ENCODE measurements at regions of chr16 and their contacts with region 1.

Region 1: DNA sequence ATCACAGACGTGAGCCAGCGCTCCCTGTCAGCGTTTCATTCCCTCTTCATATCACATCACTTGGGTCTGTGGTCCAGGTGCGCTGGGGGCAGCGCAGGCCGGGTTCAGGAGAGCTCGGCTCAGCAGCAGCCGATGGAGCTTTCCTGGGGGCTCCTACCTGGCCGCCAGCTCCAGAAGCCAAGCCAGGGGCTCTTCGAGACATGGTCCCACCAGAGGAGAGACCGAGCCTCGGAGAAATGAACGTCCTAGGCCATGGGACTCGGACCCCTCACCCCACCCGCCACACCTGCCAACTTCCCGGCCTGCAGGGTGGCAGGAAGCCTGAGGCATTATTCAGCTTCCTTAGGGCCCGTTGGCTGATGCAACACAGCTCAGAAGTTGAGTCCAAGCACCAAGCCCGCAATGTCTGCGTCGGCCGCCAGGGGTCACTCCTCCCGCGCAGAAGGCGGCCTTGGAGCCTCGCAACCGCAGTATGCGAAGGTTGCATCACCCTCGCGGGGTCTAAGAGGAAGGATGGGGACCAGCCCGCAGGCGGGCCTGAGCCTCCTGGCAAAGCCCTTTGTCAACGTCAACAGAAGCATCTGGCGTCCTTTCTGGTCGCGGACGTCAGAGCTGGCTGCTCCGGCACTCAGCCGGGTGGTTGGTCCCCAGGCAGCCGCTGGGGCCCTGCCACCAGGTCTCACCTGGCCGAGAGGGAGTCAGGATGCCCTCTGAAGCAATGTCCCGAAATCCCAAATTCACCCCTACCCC is 13.2 kb upstream of the KLHDC4 start:
- DNase-seq: peak; percentile 98
- ATAC-seq: peak; percentile 79
- H3K4me3 Mint-ChIP-seq: peak overlapping the region; percentile 89
- H3K27ac Mint-ChIP-seq: peak overlapping the region; percentile 99
- H3K4me1 Mint-ChIP-seq: peaks cover 42% of the 10 kb centered on the region
- H3K27me3 Mint-ChIP-seq: no peaks in the 10 kb centered on the region
- CTCF ChIP-seq: peak; percentile 92

Region 2: DNA sequence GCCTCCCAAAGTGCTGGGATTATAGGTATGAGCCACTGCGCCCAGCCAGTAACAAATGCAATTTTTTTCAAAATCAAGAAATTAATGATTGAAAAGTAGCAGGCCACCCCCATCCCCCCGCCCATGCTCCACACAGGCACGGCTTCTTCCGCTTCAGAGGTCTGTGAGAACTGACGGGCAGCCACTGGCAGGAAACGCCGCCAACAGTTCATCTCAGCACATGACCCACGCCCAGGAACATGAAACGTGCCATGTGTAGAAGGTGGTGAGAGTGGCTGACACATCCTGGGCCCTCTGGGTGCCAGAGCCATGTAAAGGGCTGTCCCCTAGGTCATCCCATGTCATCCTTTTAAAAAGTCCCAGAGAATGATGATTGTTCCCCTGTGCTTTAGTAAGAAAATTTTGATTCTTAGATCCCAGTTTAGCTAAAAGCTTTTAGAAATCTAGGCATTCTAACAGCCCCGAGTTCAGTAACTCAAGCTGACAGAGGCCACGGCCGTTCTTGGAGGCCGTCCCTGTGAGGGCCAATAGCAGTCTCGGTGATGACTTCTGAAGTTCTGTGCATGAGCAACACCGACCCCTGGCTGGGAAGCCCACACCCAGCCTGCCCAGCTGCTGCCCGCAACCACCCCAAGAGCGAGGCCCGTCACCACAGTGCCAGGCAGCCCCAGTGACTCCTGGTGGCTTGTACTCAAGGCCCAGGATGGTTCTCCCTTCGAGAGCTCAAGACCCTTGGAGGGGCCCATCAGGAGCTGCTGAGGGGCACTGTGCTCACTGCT is 65.4 kb before region 1 on chr16:
- CTCF ChIA-PET with region 1: no interaction called
- POLR2A ChIA-PET with region 1: no interaction called
- intact Hi-C with region 1: no loop called
- DNase-seq: peak; percentile 85
- ATAC-seq: peak; percentile 96
- H3K4me3 Mint-ChIP-seq: no peak overlapping the region
- H3K27ac Mint-ChIP-seq: peak overlapping the region; percentile 88
- H3K4me1 Mint-ChIP-seq: peaks cover 31% of the 10 kb centered on the region
- H3K27me3 Mint-ChIP-seq: no peaks in the 10 kb centered on the region
- CTCF ChIP-seq: no peak

Region 3: DNA sequence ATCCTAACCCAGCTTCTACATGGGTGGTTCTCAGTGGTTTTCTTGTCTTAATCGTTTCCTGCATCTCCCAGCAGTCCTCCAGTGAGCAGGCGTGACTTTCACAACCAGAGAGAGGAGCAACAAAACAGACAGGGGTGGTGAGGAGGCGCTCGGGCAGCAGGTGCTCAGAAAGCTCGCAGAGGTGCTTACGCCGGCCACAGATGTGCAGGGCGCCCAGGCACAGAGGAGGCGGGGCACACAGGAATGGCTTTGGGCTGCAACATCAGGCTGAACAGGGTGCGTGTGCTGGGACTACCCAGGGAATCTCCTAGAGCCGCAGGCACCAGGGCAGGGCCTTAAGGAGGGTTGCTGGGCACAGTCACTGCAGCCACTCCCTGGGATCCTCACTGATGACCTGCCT is 45.8 kb before region 1 on chr16:
- CTCF ChIA-PET with region 1: no interaction called
- POLR2A ChIA-PET with region 1: no interaction called
- intact Hi-C with region 1: no loop called
- DNase-seq: no peak
- ATAC-seq: no peak
- H3K4me3 Mint-ChIP-seq: no peak overlapping the region
- H3K27ac Mint-ChIP-seq: peak overlapping the region; percentile 38
- H3K4me1 Mint-ChIP-seq: peaks cover 16% of the 10 kb centered on the region
- H3K27me3 Mint-ChIP-seq: no peaks in the 10 kb centered on the region
- CTCF ChIP-seq: no peak

Region 4: GRCh38 chr16:87790278-87791032 is 11.4 kb after region 1 on chr16:
- CTCF ChIA-PET with region 1: interaction called, 45 read pairs
- POLR2A ChIA-PET with region 1: interaction called, 8 read pairs
- intact Hi-C with region 1: no loop called
- DNase-seq: no peak
- ATAC-seq: no peak
- H3K4me3 Mint-ChIP-seq: no peak overlapping the region
- H3K27ac Mint-ChIP-seq: no peak overlapping the region
- H3K4me1 Mint-ChIP-seq: no peaks in the 10 kb centered on the region
- H3K27me3 Mint-ChIP-seq: no peaks in the 10 kb centered on the region
- CTCF ChIP-seq: no peak

Region 5: GRCh38 chr16:87828071-87828971 is 49.3 kb after region 1 on chr16:
- CTCF ChIA-PET with region 1: interaction called, 9 read pairs
- POLR2A ChIA-PET with region 1: interaction called, 19 read pairs
- intact Hi-C with region 1: no loop called
- DNase-seq: peak; percentile 48
- ATAC-seq: peak; percentile 11
- H3K4me3 Mint-ChIP-seq: no peak overlapping the region
- H3K27ac Mint-ChIP-seq: peak overlapping the region; percentile 67
- H3K4me1 Mint-ChIP-seq: peaks cover 2% of the 10 kb centered on the region
- H3K27me3 Mint-ChIP-seq: no peaks in the 10 kb centered on the region
- CTCF ChIP-seq: no peak

Region 6: GRCh38 chr16:87844120-87844733 is 65.2 kb after region 1 on chr16:
- CTCF ChIA-PET with region 1: interaction called, 75 read pairs
- POLR2A ChIA-PET with region 1: interaction called, 28 read pairs
- intact Hi-C with region 1: no loop called
- DNase-seq: no peak
- ATAC-seq: no peak
- H3K4me3 Mint-ChIP-seq: no peak overlapping the region
- H3K27ac Mint-ChIP-seq: no peak overlapping the region
- H3K4me1 Mint-ChIP-seq: peaks cover 19% of the 10 kb centered on the region
- H3K27me3 Mint-ChIP-seq: no peaks in the 10 kb centered on the region
- CTCF ChIP-seq: no peak

Region 7: DNA sequence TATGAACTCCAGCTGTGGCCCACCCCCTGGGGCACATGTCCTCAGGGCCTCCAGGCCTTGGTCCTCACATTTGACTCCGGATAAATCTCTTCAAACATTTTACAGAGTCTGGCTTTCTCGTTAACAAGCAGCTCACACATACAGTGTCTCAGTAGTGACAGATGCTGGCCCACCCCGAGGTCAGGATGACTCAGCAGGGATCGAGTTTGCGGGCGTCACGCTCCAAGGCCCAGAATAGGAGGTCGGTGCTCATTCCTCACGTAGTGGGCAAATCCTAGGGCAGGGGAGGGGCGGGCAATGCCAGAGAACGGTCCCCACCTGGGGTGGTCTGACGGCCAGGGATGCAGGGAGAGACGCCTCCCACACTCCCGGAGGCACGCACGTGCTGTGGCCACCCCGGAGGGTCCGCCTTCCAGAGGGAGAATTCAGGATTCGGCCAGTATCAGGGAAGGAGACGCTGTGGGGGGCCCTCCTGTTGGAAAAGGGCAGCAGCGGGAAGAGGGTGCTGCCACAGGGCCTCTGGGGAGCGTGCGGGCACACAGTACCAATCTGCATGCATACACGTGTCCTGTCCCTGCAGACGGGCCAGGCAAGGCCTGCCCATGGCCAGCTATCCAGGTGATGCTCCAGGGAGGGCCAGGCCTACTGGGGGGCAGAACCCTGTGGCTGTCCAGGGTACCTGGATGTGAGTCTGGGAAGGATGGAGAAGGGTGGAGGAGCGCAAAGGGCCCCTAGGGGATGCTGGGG is 81.7 kb after region 1 on chr16:
- CTCF ChIA-PET with region 1: interaction called, 305 read pairs
- POLR2A ChIA-PET with region 1: interaction called, 106 read pairs
- intact Hi-C with region 1: no loop called
- DNase-seq: no peak
- ATAC-seq: peak; percentile 17
- H3K4me3 Mint-ChIP-seq: peak overlapping the region; percentile 56
- H3K27ac Mint-ChIP-seq: peak overlapping the region; percentile 82
- H3K4me1 Mint-ChIP-seq: peaks cover 76% of the 10 kb centered on the region
- H3K27me3 Mint-ChIP-seq: no peaks in the 10 kb centered on the region
- CTCF ChIP-seq: no peak

Region 8: DNA sequence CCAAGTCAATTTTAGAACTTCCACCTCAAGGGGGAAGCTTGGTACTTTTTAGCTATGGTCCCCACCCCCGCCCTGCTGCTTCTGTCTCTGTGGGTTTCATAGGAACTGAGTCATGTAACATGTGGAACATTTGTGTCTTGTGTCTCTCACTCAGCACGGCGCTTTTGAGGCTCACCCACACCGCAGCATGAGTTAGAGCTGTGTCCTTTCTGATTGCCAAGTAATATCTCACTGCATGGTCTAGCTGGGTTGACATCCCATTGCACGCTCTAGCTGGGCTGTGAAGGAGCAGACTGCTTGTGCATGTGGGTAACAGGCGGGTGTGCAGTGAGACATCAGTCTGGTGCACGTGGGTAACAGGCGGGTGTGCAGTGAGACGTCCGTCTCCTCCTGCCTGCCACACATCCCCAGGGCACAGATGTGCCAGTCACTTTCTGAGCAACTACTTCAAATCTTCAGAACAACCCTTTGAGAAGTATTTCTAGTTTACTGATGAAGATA is 116.7 kb after region 1 on chr16:
- CTCF ChIA-PET with region 1: interaction called, 51 read pairs
- POLR2A ChIA-PET with region 1: interaction called, 26 read pairs
- intact Hi-C with region 1: no loop called
- DNase-seq: peak; percentile 98
- ATAC-seq: peak; percentile 87
- H3K4me3 Mint-ChIP-seq: peak overlapping the region; percentile 37
- H3K27ac Mint-ChIP-seq: peak overlapping the region; percentile 97
- H3K4me1 Mint-ChIP-seq: peaks cover 47% of the 10 kb centered on the region
- H3K27me3 Mint-ChIP-seq: no peaks in the 10 kb centered on the region
- CTCF ChIP-seq: no peak

Measured in activated CD8-positive, alpha-beta T cell treated with anti-CD3 and anti-CD28 coated beads for 36 hours (primary cell).